ENCODE measurements at regions of chr2 and their contacts with region 1.

Region 1: GRCh38 chr2:68594674-68595492 is 48.5 kb upstream of the PROKR1 start:
- DNase-seq: peak; percentile 23
- ATAC-seq: peak in 1 of 2 donors; percentile 23

Region 2: DNA sequence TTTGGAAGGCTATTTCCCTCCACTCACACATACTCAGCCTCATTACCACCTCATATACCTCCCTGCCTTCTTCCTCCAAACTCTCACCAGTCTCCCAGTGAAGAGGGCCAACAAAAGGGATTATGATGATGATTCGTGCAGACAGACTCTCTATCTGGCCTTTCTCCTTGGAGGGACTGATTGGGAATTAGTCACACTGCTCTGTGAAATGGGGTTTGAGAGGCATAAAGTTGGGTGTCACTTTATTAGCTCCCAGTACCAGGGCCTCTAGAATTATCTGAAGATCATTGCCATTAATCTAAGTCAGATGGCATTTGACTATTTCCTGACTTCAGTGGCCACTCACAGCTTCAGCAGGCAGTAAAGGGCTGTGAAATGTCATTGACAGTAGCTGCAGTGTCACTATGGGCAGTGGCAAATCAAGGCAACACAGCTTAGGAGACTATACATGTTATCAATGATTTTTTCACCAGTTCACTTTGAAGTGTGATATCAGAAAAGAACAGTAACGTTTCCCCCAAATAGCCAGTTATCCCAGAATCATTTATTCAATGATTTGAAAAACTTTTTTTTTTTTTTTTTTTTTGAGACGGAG is 292.5 kb before region 1 on chr2:
- intact Hi-C with region 1: no loop called
- DNase-seq: no peak
- ATAC-seq: no peak

Region 3: DNA sequence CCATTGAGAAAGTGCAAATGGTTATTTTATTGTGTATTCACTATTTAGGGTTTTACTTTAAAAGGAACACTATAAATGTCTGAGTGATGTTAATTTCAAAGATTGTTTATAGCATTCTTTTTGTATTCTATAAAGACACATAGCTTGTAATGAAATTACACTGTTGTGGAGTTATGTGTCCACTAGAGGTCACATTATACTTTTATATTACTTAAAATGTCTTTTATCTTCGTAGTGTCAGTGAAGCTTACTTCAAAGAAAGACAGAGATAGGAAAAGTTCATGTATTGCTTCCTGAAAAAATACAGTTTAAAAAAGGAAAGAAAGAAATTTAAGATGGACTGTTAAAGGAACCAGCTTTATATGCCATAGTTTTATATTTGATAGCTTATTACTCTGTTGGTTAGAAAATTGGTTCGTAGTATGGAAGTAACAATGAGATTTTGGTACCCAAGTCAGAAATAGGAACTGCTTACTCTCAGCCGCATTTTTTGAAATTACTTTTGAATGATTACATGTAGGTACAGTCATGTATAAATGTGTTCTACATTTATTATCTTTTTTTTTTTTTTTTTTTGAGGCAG is 107.0 kb before region 1 on chr2:
- intact Hi-C with region 1: loop called in 1 of 2 experiments (anchors 10 kb)
- DNase-seq: no peak
- ATAC-seq: no peak

Region 4: GRCh38 chr2:68643011-68643873 is 48.4 kb after region 1 on chr2 and contains the start of gene PROKR1:
- intact Hi-C with region 1: no loop called
- DNase-seq: peak; percentile 54
- ATAC-seq: peak; percentile 81 to 89
- total RNA-seq, gene PROKR1: 0.12 TPM in 1 of 2 donors, not detected in the other

Region 5: DNA sequence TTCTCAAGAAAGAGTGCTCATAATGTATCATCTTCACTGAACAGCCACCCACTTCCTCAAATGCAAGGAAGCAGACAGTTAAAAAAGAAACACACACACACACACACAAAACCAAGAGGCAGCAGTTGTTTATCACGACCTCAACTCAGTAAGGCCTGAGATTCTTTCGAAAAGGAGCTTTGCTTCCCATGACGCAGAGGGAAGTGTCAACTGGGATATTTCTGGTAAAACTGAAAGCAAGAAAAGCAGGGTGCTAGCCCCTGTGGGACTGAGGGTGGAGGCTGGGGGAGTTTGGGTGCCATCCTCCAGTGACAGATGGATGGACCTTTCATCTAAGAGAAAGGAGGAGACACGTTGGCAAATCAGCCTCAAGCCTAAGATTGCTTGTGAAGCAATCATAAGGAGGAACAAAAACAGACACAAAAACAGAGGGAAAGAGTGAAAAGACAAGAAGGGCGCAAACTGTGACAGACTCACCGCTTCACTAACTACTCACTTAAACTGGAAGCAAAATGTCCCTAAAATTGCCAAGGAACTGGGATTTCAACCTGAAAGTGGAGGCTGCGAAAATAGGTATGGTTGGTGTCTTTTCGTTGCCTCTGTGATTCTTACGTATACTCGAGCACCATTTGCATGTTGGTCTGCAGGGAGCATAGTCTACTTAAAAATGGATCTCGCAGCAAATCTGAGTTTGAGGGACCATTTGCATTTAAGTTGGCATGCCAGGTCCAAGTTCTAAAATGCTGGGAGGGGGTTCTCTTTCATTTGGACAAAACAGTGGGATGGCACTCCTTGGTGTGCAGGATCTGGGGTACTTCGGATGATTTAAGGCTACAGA is 140.0 kb after region 1 on chr2 and contains the start of gene ARHGAP25:
- intact Hi-C with region 1: no loop called
- DNase-seq: no peak
- ATAC-seq: peak; percentile 45 to 65
- total RNA-seq, gene ARHGAP25: 6.8 to 11.0 TPM

Measured in left cardiac atrium (tissue), 4 donors.